ENCODE measurements at regions of chr11 and their contacts with region 1.

Region 1: GRCh38 chr11:130434521-130435223 is 6.3 kb upstream of the ADAMTS8 start:
- DNase-seq: peak; percentile 82
- ATAC-seq: peak; percentile 73
- H3K4me3 ChIP-seq: peak overlapping the region; percentile 51
- H3K27ac ChIP-seq: peak overlapping the region; percentile 77
- H3K4me1 ChIP-seq: peaks cover 9% of the 10 kb centered on the region
- H3K27me3 ChIP-seq: peaks cover 9% of the 10 kb centered on the region
- CTCF ChIP-seq: peak; percentile 88
- POLR2A ChIP-seq: no peak
- RAD21 ChIP-seq: peak; percentile 93

Region 2: DNA sequence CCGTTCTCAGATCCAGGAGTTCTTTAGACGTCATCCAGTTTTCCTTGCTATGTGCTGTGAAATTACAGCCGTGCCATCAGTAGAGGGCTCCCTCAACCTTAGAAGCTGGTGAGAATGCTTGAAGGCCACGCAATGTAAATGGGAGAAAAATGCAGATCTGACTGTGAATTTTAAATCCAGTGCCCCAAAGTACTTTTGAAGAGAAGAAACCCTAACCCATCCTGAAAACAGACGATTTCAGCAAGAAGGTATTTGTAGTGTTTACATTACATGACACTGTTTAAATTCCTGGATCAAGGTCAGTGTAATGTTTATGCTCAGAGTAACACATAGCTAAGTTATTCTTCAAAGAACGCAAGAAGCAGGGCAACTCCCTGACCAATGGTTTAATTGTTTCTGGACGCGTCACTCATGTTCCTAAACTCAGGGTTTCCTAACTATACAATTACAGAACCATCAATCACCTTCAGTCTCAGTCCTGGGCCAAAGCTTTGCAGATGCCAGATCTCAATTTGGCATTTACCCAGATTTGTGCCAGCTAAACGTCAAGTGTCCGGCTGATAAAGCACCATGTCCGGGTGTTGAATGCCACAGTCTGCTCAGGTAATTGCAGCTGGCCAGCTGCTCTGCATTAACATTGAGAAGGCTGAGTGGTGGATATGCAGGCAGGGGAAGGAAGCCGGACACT is 44.5 kb before region 1 on chr11:
- CTCF ChIA-PET with region 1: interaction called, 8 read pairs
- POLR2A ChIA-PET with region 1: no interaction called
- dilution Hi-C with region 1: no loop called
- in situ Hi-C with region 1: no loop called
- intact Hi-C with region 1: loop called (anchors 1 kb)
- DNase-seq: peak; percentile 99
- ATAC-seq: peak; percentile 88
- H3K4me3 ChIP-seq: no peak overlapping the region
- H3K27ac ChIP-seq: peak overlapping the region; percentile 68; the same call in 1 of the 2 replicates
- H3K4me1 ChIP-seq: peaks cover 12% of the 10 kb centered on the region
- H3K27me3 ChIP-seq: peaks cover 32% of the 10 kb centered on the region
- CTCF ChIP-seq: peak; percentile 89
- POLR2A ChIP-seq: 0 out of 2 replicates have a peak, but pooled peaks have one; percentile 29
- RAD21 ChIP-seq: peak; percentile 86

Region 3: GRCh38 chr11:130827451-130828377 is 393.0 kb after region 1 on chr11:
- CTCF ChIA-PET with region 1: interaction called, 6 read pairs
- POLR2A ChIA-PET with region 1: no interaction called
- dilution Hi-C with region 1: no loop called
- in situ Hi-C with region 1: no loop called
- intact Hi-C with region 1: loop called (anchors 1 kb)
- DNase-seq: peak; percentile 82
- ATAC-seq: peak; percentile 97
- H3K4me3 ChIP-seq: no peak overlapping the region
- H3K27ac ChIP-seq: peak overlapping the region; percentile 77
- H3K4me1 ChIP-seq: peaks cover 14% of the 10 kb centered on the region
- H3K27me3 ChIP-seq: peaks cover 6% of the 10 kb centered on the region
- CTCF ChIP-seq: peak; percentile 73
- POLR2A ChIP-seq: no peak
- RAD21 ChIP-seq: peak; percentile 91

Region 4: DNA sequence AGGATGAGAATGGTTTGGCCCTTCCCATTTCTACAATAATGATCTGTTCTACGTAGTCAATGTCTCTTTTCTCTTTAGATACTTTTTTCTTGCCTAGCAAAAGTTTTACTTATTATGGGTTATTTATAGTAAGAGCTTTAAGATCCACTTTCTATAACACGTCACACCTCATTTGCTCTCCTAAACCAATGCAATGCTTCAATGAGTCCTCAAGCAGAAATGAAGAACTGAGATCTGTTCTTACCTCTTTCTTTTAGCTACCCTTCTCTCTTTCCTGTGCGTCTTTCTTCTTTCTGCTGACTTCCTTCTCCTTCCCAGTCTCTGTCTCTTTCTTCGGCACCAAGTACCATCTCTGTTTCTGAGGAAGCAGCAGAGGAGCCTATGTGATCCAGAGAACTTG is 419.8 kb after region 1 on chr11:
- CTCF ChIA-PET with region 1: interaction called, 95 read pairs
- POLR2A ChIA-PET with region 1: no interaction called
- dilution Hi-C with region 1: loop called (anchors 25 kb)
- in situ Hi-C with region 1: loop called (anchors 5 kb)
- intact Hi-C with region 1: no loop called
- DNase-seq: no peak
- ATAC-seq: no peak
- H3K4me3 ChIP-seq: no peak overlapping the region
- H3K27ac ChIP-seq: no peak overlapping the region
- H3K4me1 ChIP-seq: peaks cover 10% of the 10 kb centered on the region
- H3K27me3 ChIP-seq: no peaks in the 10 kb centered on the region; the same call in 1 of the 2 replicates
- CTCF ChIP-seq: no peak
- POLR2A ChIP-seq: no peak
- RAD21 ChIP-seq: no peak

Region 5: GRCh38 chr11:130894322-130895025 is 459.8 kb after region 1 on chr11:
- CTCF ChIA-PET with region 1: interaction called, 6 read pairs
- POLR2A ChIA-PET with region 1: no interaction called
- dilution Hi-C with region 1: no loop called
- in situ Hi-C with region 1: no loop called
- intact Hi-C with region 1: loop called (anchors 1 kb)
- DNase-seq: peak; percentile 77
- ATAC-seq: peak; percentile 40
- H3K4me3 ChIP-seq: no peak overlapping the region
- H3K27ac ChIP-seq: peak overlapping the region; percentile 19; the same call in 1 of the 2 replicates
- H3K4me1 ChIP-seq: peaks cover 20% of the 10 kb centered on the region
- H3K27me3 ChIP-seq: no peaks in the 10 kb centered on the region
- CTCF ChIP-seq: peak; percentile 86
- POLR2A ChIP-seq: no peak
- RAD21 ChIP-seq: peak; percentile 85

Region 6: DNA sequence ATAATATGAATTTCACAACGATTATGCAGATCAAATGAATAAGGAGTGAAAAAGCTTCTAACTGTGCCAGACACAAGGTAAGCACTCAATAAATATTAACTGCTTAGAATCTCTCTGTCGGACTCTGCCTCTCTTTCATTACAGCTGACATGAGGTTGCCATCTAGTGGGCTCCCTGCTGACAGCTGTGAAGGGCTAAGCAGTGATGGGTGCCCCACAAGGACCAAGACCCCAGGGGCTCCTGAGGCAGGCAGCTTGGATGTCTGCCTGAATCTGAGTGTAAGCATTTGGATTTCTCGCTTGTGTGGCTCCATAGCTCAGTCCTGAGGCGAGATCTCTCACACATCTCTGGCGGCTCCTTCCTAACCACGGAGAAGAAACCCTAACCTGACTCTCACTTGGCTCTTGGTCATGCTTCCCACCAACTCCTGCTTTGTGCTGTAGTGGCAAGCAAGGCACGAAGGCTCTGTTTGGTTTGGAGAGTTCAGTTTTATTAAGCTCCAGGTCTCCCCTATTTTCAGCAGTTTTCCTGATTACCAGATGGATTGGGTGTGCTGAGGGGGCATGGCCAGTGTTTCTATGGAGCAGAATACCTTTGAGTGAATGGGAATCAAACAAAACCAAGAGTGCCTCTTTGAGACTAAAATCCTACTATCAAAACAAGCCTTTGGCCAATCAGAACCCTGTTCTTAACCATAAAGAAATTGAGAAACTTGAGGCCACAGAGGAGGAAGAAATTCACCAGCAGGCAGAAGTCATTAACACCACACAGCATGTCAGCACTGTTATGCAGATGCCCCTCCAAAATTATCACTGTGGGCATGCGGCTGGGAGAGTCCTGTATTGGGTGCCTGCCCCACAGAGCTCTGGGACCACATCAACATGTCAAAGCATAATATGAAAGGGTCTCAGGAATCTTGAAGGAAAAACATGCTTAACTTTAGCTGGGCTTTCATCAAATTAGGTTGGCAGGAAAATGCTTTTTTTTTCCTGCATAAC is 782.9 kb after region 1 on chr11:
- CTCF ChIA-PET with region 1: no interaction called
- POLR2A ChIA-PET with region 1: no interaction called
- dilution Hi-C with region 1: no loop called
- in situ Hi-C with region 1: no loop called
- intact Hi-C with region 1: loop called (anchors 10 kb)
- DNase-seq: peak; percentile 21
- ATAC-seq: peak; percentile 79
- H3K4me3 ChIP-seq: no peak overlapping the region
- H3K27ac ChIP-seq: no peak overlapping the region
- H3K4me1 ChIP-seq: no peaks in the 10 kb centered on the region
- H3K27me3 ChIP-seq: peaks cover 8% of the 10 kb centered on the region
- CTCF ChIP-seq: peak; percentile 61
- POLR2A ChIP-seq: no peak
- RAD21 ChIP-seq: peak; percentile 71